AG04449 (cell line): ENCODE measurements at regions of chr1 and their contacts with region 1.

Region 1: GRCh38 chr1:155017041-155017945 is 14.7 kb downstream of the ZBTB7B start:
- DNase-seq: peak; percentile 14
- H3K4me3 ChIP-seq: peak overlapping the region; percentile 43
- CTCF ChIP-seq: peak; percentile 100

Region 2: DNA sequence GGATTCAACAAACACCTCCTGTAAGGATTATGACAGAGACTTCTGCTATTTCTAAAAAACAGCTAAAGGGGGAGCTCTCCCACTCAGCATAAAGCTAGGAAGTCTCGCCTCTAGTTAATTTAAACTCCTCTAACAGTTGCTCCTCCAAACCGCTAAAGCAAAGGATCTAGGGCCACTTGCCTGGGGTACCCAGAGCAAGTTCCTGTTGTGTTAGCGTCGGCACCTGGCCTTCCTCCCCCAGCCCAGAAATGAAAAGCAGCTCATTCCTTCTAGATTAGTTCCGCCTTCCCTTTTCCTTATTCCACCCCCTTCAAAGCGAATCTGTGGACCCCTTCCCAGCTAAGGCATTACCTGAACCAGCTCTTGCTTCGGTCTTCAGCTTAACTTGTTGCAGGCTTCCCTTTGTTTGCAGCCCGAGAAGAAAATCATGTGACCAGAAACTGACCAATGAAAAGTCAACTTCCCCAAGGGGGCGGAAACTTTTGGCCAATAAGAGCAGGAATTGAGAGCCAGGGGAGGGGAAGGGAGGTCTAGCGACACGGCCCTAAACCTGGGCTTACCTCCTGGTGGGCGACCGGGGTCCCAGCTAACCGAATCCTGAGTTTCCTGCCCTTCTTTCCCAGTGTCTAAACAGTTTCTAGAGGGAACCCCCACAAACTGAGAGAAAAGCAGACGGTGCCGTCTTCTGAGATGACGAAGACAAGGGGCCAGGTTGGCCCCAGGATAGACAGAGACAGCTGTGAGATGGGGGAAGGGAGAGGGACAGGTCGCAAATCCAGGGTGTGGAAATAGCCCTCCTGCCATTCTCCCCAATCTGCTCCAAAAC is 61.4 kb before region 1 on chr1 and contains the start of gene PBXIP1:
- CTCF ChIA-PET with region 1: interaction called, 44 read pairs
- POLR2A ChIA-PET with region 1: interaction called, 5 read pairs
- DNase-seq: peak; percentile 50
- H3K4me3 ChIP-seq: peak within 1 kb of the TSS; percentile 66
- CTCF ChIP-seq: peak; percentile 31

Region 3: GRCh38 chr1:154974063-154974807 is 43.1 kb before region 1 on chr1 and contains the start of gene CKS1B:
- CTCF ChIA-PET with region 1: interaction called, 19 read pairs
- POLR2A ChIA-PET with region 1: interaction called, 6 read pairs
- DNase-seq: peak; percentile 100
- H3K4me3 ChIP-seq: peak within 1 kb of the TSS; percentile 75
- CTCF ChIP-seq: no peak

Region 4: GRCh38 chr1:155044812-155045690 is 27.8 kb after region 1 on chr1:
- CTCF ChIA-PET with region 1: interaction called, 176 read pairs
- POLR2A ChIA-PET with region 1: no interaction called
- DNase-seq: no peak
- H3K4me3 ChIP-seq: no peak overlapping the region
- CTCF ChIP-seq: peak; percentile 75

Region 5: DNA sequence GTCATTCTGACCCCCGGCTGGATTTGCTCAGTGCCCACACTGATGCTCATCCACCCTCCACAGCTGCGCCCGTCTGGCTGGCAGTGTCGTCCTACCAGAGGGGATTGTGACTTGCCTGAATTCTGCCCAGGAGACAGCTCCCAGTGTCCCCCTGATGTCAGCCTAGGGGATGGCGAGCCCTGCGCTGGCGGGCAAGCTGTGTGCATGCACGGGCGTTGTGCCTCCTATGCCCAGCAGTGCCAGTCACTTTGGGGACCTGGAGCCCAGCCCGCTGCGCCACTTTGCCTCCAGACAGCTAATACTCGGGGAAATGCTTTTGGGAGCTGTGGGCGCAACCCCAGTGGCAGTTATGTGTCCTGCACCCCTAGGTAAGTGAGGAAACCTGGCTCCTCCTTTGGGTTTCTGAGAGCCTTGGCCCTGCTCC is 40.5 kb after region 1 on chr1:
- CTCF ChIA-PET with region 1: interaction called, 21 read pairs
- POLR2A ChIA-PET with region 1: no interaction called
- DNase-seq: no peak
- H3K4me3 ChIP-seq: no peak overlapping the region
- CTCF ChIP-seq: peak; percentile 11

Region 6: GRCh38 chr1:155106850-155107249 is 89.6 kb after region 1 on chr1:
- CTCF ChIA-PET with region 1: no interaction called
- POLR2A ChIA-PET with region 1: no interaction called
- DNase-seq: no peak
- H3K4me3 ChIP-seq: no peak overlapping the region
- CTCF ChIP-seq: no peak

Region 7: DNA sequence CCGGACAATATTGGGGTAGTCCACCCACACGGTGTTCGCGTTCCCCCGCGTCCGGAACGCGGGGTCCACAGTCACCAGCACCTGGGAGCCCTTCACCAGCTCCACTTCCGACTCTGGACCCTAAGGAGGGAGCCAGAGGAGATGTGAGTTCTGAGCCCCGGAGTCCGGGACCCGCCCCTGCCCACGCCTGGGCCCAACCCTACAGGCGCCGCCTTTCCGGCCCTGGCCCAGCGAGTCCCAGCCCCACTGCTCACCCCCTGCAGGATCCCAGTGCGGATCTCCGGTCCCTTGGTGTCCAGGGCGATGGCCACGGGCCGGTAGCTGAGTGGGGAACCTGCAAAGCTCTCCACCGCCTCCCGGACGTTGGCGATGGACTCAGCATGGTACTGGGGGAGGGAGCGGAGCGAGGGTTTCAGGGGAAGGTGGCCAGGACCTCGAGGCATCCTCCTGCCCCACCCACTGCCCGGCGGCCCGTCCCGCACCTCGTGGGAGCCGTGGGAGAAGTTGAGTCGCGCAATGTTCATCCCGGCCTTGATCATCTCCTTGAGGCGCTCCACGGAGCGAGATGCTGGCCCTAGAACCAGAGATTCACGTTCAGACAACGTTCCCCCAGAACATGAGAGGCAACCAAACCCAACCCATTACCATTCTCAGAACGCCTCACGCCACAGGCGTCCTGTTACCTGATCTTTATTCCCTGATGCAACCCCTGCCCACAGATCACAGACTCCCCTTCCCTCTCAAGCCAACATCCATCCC is 278.1 kb after region 1 on chr1:
- CTCF ChIA-PET with region 1: no interaction called
- POLR2A ChIA-PET with region 1: no interaction called
- DNase-seq: no peak
- H3K4me3 ChIP-seq: no peak overlapping the region
- CTCF ChIP-seq: no peak